GM10248 (cell line): ENCODE measurements at regions of chr20 and their contacts with region 1.

Region 1: DNA sequence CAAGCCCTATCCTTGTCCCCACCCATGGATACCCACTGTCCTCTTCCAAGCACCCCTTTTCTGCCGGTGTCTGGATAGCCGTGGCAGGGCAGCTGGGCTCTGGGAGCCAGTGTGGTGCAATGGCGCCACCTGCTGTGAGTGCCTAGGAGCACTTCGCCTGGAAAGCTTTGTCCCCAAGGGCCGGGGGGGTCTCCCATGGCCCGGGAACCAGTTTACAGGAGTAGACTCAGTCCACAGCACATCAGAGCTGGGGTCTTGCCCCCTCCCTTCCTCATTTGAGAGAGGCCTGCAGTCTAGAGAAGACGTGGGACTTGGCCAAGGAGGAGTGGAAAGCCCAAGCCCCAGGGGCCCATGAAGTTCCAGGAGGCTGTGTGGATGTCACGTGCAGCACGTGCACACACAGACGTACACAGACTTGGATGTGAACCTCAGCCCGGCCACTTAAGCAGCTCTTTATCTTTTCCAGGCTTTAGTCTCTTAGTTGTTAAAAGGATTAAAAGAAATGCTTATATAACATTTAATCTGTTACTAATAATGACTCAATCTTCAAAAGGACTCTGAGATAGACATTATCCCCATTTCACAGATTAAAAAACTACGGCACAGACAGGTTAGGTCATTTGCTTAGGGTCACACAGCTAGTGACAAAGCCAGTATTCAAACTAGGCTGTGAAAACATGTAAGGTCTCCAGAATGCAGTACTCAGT is 40.9 kb upstream of the CDH22 start:
- DNase-seq: peak; percentile 75
- CTCF ChIP-seq: peak; percentile 67

Region 2: GRCh38 chr20:46013826-46014516 is 335.2 kb before region 1 on chr20:
- CTCF ChIA-PET with region 1: interaction called, 24 read pairs
- POLR2A ChIA-PET with region 1: no interaction called
- DNase-seq: peak; percentile 85
- CTCF ChIP-seq: peak; percentile 82

Region 3: DNA sequence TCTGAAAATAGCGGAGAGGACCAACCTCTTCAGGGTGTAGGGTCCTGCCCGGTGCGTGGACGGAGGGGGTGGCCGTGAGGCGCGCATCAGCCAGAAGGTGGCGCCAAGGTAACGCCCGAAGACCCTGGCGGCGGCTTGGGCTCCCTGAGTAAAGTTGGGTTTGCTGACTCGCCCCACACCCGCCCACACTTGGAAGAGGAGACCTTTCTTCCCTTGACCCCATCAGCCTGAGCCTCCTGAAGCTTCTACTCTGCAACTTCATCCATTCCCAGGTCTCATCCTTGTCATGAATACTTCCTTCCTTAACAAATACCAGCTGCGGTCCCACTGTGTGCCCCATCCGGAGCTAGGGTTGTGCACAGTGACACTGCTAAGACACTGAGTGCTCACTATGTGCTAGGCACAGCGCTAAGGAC is 216.5 kb before region 1 on chr20:
- CTCF ChIA-PET with region 1: interaction called, 33 read pairs
- POLR2A ChIA-PET with region 1: no interaction called
- DNase-seq: peak; percentile 83
- CTCF ChIP-seq: peak; percentile 90

Region 4: GRCh38 chr20:46316984-46317684 is 32.1 kb before region 1 on chr20:
- CTCF ChIA-PET with region 1: interaction called, 24 read pairs
- POLR2A ChIA-PET with region 1: no interaction called
- DNase-seq: no peak
- CTCF ChIP-seq: no peak

Region 5: GRCh38 chr20:46330072-46330763 is 19.0 kb before region 1 on chr20:
- CTCF ChIA-PET with region 1: interaction called, 13 read pairs
- POLR2A ChIA-PET with region 1: no interaction called
- DNase-seq: no peak
- CTCF ChIP-seq: no peak

Region 6: DNA sequence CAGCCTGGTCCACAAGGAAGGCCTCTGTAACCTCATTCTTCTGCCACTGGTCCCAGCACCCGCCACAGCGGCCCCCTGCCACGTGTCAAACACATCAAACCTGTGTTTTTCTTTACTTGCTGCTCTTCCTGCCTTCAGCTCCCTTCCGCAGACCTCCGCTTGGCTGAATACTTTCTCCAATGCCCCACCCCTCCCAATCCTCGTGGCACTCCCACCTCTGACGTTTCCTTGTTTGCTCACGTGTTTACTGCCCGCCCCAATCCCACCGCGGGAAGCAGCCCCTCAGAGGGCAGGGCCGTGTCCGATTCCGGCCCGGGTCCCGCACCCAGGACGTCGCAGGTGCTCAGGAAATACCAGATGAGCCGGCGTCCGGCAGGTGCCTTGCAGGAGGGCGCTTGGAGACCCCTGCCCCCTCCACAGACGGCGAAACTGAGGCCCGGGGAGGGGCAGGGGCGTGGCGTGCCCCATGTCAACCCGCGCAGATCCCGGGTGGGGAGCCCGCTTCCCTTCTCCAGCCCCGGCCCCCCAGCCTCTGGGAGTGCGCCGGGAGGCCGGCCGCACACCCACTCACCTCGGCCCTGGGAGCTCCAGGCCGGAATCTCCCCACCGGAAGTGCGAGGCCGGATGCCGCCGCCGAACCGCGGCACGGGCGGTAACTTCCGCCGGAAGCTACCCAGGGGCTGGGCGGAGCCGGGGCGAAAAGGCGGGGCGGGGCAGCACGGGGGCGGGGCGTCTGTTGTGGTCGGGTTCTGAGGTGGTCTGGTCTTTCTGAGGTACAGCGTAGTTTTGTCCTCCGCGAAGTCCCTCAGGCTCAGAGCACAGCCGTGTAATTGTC is 14.8 kb after region 1 on chr20:
- CTCF ChIA-PET with region 1: interaction called, 45 read pairs
- POLR2A ChIA-PET with region 1: interaction called, 3 read pairs
- DNase-seq: peak; percentile 94
- CTCF ChIP-seq: no peak